Activated CD4-positive, alpha-beta T cell treated with anti-CD3 and anti-CD28 coated beads for 36 hours (primary cell): ENCODE measurements at regions of chr1 and their contacts with region 1.

Region 1: GRCh38 chr1:45033356-45033755 is 21.3 kb downstream of the UROD start:
- DNase-seq: no peak
- ATAC-seq: no peak
- H3K4me3 Mint-ChIP-seq: no peak overlapping the region
- H3K27ac Mint-ChIP-seq: no peak overlapping the region
- H3K4me1 Mint-ChIP-seq: peaks cover 7% of the 10 kb centered on the region
- H3K27me3 Mint-ChIP-seq: no peaks in the 10 kb centered on the region

Region 2: DNA sequence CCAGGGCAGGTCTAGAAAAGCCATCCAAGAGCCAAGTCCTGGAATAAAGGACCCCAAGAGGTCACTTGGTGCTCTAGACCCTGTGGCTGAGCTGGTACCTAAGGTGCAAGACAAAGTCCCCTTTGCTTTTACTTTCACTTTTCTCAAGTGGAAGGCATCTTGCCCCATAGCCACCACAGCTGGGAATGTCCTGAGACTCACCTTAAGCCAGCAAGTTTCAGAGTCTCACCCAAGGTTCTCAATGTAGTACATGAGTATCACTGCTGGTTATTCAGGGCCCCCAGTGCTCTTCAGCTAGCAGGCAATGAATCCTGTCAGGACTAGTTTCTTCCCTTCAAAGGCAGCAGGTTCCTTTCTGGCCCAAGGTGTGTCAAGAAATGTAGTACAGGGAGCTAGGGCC is 46.2 kb after region 1 on chr1:
- CTCF ChIA-PET with region 1: no interaction called
- POLR2A ChIA-PET with region 1: no interaction called
- intact Hi-C with region 1: loop called in 1 of 2 experiments (anchors 2 kb)
- DNase-seq: no peak
- ATAC-seq: no peak
- H3K4me3 Mint-ChIP-seq: no peak overlapping the region
- H3K27ac Mint-ChIP-seq: no peak overlapping the region
- H3K4me1 Mint-ChIP-seq: no peaks in the 10 kb centered on the region
- H3K27me3 Mint-ChIP-seq: peaks cover 5% of the 10 kb centered on the region